Activated CD8-positive, alpha-beta T cell treated with anti-CD3 and anti-CD28 coated beads, Interleukin-2, amount 10 ng/mL, durations not matched to agents 7 days and 5 days (primary cell): ENCODE measurements at regions of chr17 and their contacts with region 1.

Region 1: DNA sequence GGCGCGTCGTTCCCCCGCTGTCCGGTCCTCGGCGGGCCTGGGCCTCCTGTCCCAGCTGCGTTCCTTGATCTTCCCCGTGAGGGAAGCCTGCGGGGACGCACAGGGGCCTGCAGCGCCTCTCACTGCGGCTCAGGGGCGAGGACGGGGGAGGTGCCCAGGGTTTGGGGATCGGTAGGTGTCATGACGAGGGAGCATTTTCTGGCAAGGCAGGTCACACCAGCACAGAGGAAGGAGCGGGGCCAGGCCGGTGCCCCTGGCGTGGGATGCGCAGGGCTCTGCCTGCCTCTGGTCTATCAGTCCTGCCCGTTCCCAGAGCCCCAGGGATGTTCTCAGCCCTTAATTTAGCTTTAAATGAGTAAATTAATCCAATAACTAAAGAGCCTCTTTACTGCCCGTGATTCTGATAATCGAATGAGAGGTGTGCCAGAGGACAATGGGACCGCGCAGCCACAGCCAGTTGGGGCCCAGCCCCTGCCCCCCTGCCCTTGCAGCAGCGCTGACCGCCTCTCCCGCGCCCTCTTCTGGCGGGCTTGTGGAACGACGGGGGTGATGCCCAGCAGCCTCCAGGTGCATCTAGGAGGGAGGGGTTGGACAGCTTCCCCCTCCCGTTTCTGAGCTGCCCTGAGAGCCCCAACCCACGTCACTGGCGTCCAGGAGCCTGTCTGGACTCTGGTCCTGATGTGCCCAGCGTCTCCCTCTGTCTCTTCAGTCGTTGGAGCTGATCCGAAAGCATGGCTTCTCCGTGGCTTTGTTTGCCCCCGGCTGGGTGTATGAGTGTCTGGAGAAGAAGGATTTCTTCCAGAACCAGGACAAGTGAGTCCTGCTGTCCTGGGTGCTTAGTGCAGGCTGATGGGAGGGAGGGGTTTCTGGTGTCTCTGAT is 7.9 kb downstream of the ENGASE start:
- DNase-seq: peak; percentile 61
- ATAC-seq: peak; percentile 40
- H3K4me3 Mint-ChIP-seq: no peak overlapping the region
- H3K27ac Mint-ChIP-seq: no peak overlapping the region
- H3K4me1 Mint-ChIP-seq: no peaks in the 10 kb centered on the region
- H3K27me3 Mint-ChIP-seq: no peaks in the 10 kb centered on the region

Region 2: DNA sequence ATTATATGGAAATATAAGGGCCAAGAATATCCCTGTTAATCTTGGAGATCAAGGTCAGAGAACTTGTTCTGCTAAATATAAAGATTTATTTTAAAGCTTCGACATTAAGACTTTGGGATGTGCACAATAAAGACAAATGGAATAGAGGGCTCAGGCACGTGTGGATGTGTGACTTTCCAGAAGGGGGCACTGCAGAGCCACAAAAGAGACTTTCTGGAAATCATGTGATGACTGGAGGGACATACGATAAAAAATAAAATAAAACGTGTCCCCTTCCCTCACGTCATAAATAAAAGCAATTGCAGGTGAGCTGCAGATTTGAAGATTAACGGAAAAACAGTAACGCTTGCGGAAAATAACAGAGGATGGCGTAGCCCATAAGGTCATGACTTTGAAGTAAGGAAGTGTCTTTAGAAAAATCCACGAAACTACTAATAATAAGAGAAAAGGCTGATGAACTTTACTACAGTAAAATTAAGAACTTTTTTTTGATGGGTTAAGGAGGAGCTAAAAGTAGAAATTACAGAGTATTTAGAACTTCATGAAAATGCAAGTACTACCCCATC is 17.4 kb before region 1 on chr17:
- CTCF ChIA-PET with region 1: interaction called, 11 read pairs
- POLR2A ChIA-PET with region 1: no interaction called
- DNase-seq: peak; percentile 66
- ATAC-seq: peak; percentile 68
- H3K4me3 Mint-ChIP-seq: no peak overlapping the region
- H3K27ac Mint-ChIP-seq: no peak overlapping the region
- H3K4me1 Mint-ChIP-seq: peaks cover 5% of the 10 kb centered on the region
- H3K27me3 Mint-ChIP-seq: peaks cover 3% of the 10 kb centered on the region

Region 3: GRCh38 chr17:79137015-79137788 is 54.7 kb after region 1 on chr17:
- CTCF ChIA-PET with region 1: no interaction called
- POLR2A ChIA-PET with region 1: no interaction called
- DNase-seq: no peak
- ATAC-seq: no peak
- H3K4me3 Mint-ChIP-seq: no peak overlapping the region
- H3K27ac Mint-ChIP-seq: no peak overlapping the region
- H3K4me1 Mint-ChIP-seq: no peaks in the 10 kb centered on the region
- H3K27me3 Mint-ChIP-seq: no peaks in the 10 kb centered on the region